HAP-1 (cell line): ENCODE measurements at regions of chrX and their contacts with region 1.

Region 1: DNA sequence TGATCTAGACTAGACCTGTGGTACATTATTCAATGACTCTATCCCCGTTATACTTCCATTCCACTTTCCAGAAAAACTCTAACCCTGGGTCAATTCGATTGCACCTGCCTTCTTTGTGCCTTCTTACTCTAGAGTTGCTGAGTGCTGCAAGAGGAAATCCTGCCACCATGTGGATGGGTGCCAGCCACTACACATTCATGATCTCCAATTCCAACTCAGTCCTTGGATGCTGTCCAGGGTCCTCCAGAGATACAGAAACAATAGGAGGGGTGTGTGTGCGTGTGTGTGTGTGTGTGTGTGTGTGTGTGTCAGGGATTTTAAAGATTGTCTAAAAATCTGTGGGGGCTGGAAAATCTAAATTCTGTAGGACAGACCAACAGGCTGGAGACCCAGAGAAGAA is 42.9 kb upstream of the INTS6L start:
- DNase-seq: peak; percentile 86 to 89
- H3K4me3 ChIP-seq: no peak overlapping the region
- H3K4me1 ChIP-seq: 0 out of 2 replicates have a peak, but pooled peaks cover 2% of the 10 kb centered on the region
- H3K27me3 ChIP-seq: no peaks in the 10 kb centered on the region

Region 2: GRCh38 chrX:135112096-135112729 is 365.4 kb before region 1 on chrX:
- in situ Hi-C with region 1: loop called (anchors 25 kb)
- DNase-seq: peak; percentile 50 to 72
- H3K4me3 ChIP-seq: no peak overlapping the region
- H3K4me1 ChIP-seq: no peaks in the 10 kb centered on the region
- H3K27me3 ChIP-seq: peaks cover 9% of the 10 kb centered on the region